ENCODE measurements at regions of chr22 and their contacts with region 1.

Region 1: GRCh38 chr22:39932918-39933649 is 27.1 kb upstream of the TMA7B start:
- DNase-seq: peak; percentile 76
- H3K4me3 Mint-ChIP-seq: peak overlapping the region; percentile 74
- H3K27ac Mint-ChIP-seq: peak overlapping the region; percentile 79
- H3K4me1 Mint-ChIP-seq: peaks cover 58% of the 10 kb centered on the region
- H3K27me3 Mint-ChIP-seq: no peaks in the 10 kb centered on the region

Region 2: DNA sequence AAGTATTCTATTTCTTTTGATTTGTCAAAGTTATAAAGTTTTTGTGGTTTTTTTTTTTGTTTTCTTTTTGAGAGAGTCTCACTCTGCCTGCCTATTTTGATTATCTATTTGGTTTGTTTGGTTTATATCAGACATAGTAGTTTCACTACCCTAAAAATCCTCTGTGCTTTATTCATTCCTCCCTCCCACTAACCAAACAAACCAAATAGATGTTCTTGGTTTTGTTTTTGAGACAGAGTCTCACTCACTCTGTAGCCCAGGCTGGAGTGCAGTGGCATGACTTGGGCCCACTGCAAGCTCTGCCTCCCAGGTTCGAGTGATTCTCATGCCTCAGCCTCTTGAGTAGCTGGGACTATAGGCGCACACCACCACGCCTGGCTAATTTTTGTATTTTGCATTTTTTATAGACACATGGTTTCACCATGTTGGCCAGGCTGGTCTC is 107.4 kb before region 1 on chr22:
- CTCF ChIA-PET with region 1: no interaction called
- POLR2A ChIA-PET with region 1: no interaction called
- intact Hi-C with region 1: no loop called
- DNase-seq: no peak
- H3K4me3 Mint-ChIP-seq: no peak overlapping the region
- H3K27ac Mint-ChIP-seq: no peak overlapping the region
- H3K4me1 Mint-ChIP-seq: peaks cover 3% of the 10 kb centered on the region
- H3K27me3 Mint-ChIP-seq: no peaks in the 10 kb centered on the region

Region 3: GRCh38 chr22:39839917-39840510 is 93.1 kb before region 1 on chr22:
- CTCF ChIA-PET with region 1: no interaction called
- POLR2A ChIA-PET with region 1: interaction called, 3 read pairs
- intact Hi-C with region 1: loop called (anchors 10 kb)
- DNase-seq: peak; percentile 63
- H3K4me3 Mint-ChIP-seq: no peak overlapping the region
- H3K27ac Mint-ChIP-seq: no peak overlapping the region
- H3K4me1 Mint-ChIP-seq: peaks cover 14% of the 10 kb centered on the region
- H3K27me3 Mint-ChIP-seq: no peaks in the 10 kb centered on the region

Region 4: GRCh38 chr22:39917776-39918495 is 15.1 kb before region 1 on chr22:
- CTCF ChIA-PET with region 1: interaction called, 45 read pairs
- POLR2A ChIA-PET with region 1: interaction called, 219 read pairs
- intact Hi-C with region 1: loop called (anchors 1 kb)
- DNase-seq: no peak
- H3K4me3 Mint-ChIP-seq: peak overlapping the region; percentile 68
- H3K27ac Mint-ChIP-seq: peak overlapping the region; percentile 93
- H3K4me1 Mint-ChIP-seq: peaks cover 84% of the 10 kb centered on the region
- H3K27me3 Mint-ChIP-seq: no peaks in the 10 kb centered on the region

Region 5: DNA sequence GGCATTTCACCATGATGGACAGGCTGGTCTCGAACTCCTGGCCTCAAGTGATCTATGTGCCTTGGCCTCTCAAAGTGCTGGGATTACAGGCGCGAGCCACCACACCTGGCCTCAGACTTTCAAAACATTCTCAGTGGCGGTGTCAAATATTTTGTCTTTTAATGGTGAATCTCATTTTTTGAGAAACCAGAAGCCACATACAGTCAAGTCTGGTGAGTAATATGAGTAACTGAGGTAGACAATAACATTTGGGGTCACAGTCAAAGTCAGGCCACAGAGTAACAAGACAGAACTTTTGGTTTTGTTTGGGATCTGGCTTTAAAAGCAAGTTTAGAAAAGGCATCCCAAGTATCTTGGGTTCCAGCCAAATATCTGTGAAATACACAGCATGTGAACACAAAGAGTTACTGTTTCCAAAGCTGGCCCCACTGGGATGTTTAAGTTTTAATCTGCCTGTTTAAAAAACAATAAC is 21.5 kb after region 1 on chr22:
- CTCF ChIA-PET with region 1: interaction called, 37 read pairs
- POLR2A ChIA-PET with region 1: interaction called, 3 read pairs
- intact Hi-C with region 1: no loop called
- DNase-seq: peak; percentile 57
- H3K4me3 Mint-ChIP-seq: no peak overlapping the region
- H3K27ac Mint-ChIP-seq: peak overlapping the region; percentile 15
- H3K4me1 Mint-ChIP-seq: peaks cover 86% of the 10 kb centered on the region
- H3K27me3 Mint-ChIP-seq: no peaks in the 10 kb centered on the region

Region 6: GRCh38 chr22:39994566-39995392 is 61.7 kb after region 1 on chr22 and contains the start of gene FAM83F:
- CTCF ChIA-PET with region 1: interaction called, 10 read pairs
- POLR2A ChIA-PET with region 1: interaction called, 3 read pairs
- intact Hi-C with region 1: no loop called
- DNase-seq: peak; percentile 32
- H3K4me3 Mint-ChIP-seq: peak within 1 kb of the TSS; percentile 50
- H3K27ac Mint-ChIP-seq: no peak within 1 kb of the TSS
- H3K4me1 Mint-ChIP-seq: peaks cover 7% of the 10 kb centered on the region
- H3K27me3 Mint-ChIP-seq: peaks cover 15% of the 10 kb centered on the region
- total RNA-seq, gene FAM83F: 0.26 to 0.41 TPM

Measured in activated CD4-positive, alpha-beta memory T cell treated with anti-CD3 and anti-CD28 coated beads for 36 hours (primary cell).